Body of pancreas (tissue), 4 donors: ENCODE measurements at regions of chr20 and their contacts with region 1.

Region 1: DNA sequence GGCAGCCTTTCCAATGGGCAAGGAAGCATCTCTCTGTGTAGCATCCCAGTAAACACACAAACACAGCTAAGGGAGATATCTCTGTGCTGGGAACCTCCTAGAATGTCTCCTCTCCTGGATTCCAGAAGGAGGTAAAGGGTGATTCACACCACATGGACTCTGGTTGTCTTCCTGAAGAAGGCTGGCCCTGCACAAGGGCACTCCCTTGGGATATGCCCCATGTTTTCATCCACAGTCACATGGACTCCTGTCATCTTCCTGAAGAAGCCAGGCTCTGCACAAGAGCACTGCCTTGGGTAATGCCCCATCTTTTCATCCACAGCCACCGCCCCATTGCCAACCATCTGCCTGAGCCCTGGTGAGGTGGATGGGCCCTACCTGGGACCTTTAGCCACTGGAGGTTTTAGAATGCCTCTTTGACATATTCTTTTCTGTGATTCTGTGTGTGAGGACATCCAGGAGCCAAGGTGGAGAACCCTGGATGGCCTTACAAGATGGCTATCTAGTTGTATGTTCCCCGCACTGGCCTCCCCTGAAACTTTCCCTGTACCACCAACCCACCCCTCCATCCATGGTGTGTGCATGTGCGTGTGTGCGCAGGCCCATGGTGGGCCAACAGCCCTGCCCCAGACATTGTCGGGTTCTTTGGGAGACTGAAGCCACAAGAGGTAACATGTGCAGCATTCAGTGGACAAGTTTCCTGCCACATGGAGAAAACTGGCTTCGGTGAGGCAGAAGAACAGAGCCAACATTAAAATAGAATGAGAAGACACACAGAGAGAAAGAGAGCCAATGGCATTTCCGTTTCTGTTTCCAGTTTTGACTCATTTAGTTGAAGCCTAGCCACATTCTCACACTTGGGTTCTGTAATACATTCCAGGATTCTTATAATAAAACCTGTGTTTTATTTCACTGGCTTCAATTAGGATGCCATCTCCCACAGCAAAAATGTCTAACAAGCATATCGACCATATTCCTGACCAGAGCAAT is 110.2 kb upstream of the CST7 start:
- DNase-seq: no peak
- ATAC-seq: no peak
- H3K4me3 ChIP-seq: no peak overlapping the region
- H3K27ac ChIP-seq: no peak overlapping the region
- H3K4me1 ChIP-seq: no peaks in the 10 kb centered on the region
- H3K27me3 ChIP-seq: no peaks in the 10 kb centered on the region
- CTCF ChIP-seq: no peak
- POLR2A ChIP-seq: no peak

Region 2: GRCh38 chr20:24318569-24319352 is 520.1 kb before region 1 on chr20:
- intact Hi-C with region 1: loop called (anchors 10 kb)
- DNase-seq: no peak
- ATAC-seq: no peak
- H3K4me3 ChIP-seq: no peak overlapping the region
- H3K27ac ChIP-seq: no peak overlapping the region
- H3K4me1 ChIP-seq: no peaks in the 10 kb centered on the region
- H3K27me3 ChIP-seq: no peaks in the 10 kb centered on the region
- CTCF ChIP-seq: no peak
- POLR2A ChIP-seq: no peak